WTC11 (cell line): ENCODE measurements at regions of chr7 and their contacts with region 1.

Region 1: DNA sequence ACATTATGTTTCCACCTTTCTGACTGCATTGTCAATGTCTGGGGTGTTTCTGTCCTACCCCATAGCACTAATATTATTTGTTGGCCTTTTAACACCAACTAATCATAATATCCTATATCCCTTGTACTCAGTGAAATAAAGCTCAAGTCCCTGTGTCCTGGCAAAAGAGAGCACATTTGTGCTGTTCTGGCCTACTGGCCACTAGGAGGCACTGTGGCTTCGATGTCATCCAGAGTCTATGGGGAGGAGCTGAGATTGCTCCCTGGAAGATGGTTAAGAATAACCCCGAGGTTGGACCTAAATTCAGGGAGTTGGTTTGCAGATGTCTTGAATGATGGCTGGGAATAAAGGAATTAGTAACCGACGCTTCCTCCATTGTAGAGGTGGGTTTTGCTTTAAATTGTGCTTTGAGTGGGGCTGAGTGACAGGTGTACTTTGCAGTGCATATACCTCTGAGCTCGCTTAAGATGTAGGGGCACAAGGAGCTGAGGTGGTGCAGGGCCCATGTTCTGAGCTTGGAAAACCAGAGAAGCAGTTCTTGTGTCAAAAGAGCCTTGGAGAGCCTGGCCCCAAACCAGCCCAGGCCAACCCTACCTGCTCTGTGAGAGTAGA is 191.2 kb upstream of the PRSS1 start:
- DNase-seq: peak; percentile 76
- ATAC-seq: peak; percentile 93
- H3K4me3 Mint-ChIP-seq: no peak overlapping the region
- H3K27ac Mint-ChIP-seq: no peak overlapping the region
- H3K4me1 Mint-ChIP-seq: peaks cover 2% of the 10 kb centered on the region; the same call in 1 of the 2 replicates
- H3K27me3 Mint-ChIP-seq: peaks cover 3% of the 10 kb centered on the region; the same call in 1 of the 2 replicates
- CTCF ChIP-seq: peak; percentile 61

Region 2: GRCh38 chr7:142301923-142302550 is 256.0 kb before region 1 on chr7:
- CTCF ChIA-PET with region 1: interaction called, 11 read pairs
- POLR2A ChIA-PET with region 1: no interaction called
- DNase-seq: no peak
- ATAC-seq: no peak
- H3K4me3 Mint-ChIP-seq: no peak overlapping the region
- H3K27ac Mint-ChIP-seq: no peak overlapping the region
- H3K4me1 Mint-ChIP-seq: peaks cover 29% of the 10 kb centered on the region
- H3K27me3 Mint-ChIP-seq: peaks cover 22% of the 10 kb centered on the region
- CTCF ChIP-seq: no peak

Region 3: DNA sequence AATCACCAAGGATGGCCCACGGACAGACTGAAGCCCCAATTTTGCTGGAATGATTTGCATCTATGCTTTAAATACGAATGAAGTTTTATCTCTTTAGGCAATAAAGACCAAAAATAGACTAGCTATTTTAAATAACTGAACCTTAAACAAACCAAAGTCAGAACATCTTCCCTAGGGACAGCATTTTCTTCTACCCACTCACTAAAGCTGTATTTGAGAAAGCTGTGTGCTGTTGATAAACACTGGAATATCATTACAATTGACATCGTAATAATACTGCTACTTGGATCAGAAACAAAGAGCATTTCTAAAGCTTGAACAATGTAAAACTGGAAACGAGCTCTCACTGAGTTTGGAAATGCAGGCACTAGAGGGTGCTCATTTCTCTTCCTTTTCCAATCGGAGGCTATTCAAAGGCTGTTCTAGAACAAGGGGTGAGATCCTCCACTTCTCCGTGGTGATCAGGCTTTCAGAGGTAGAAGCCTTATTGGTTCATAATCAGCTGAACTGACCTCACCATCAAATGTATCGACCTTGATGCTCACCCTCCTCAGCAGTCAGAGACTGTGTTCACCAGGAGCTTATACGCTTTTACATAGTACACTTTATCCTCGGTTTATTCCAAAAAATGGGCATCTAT is 34.1 kb before region 1 on chr7:
- CTCF ChIA-PET with region 1: interaction called, 17 read pairs
- POLR2A ChIA-PET with region 1: no interaction called
- DNase-seq: no peak
- ATAC-seq: peak; percentile 27
- H3K4me3 Mint-ChIP-seq: no peak overlapping the region
- H3K27ac Mint-ChIP-seq: no peak overlapping the region
- H3K4me1 Mint-ChIP-seq: peaks cover 3% of the 10 kb centered on the region; the same call in 1 of the 2 replicates
- H3K27me3 Mint-ChIP-seq: peaks cover 2% of the 10 kb centered on the region; the same call in 1 of the 2 replicates
- CTCF ChIP-seq: no peak

Region 4: GRCh38 chr7:142546452-142546851 is 11.6 kb before region 1 on chr7:
- CTCF ChIA-PET with region 1: interaction called, 27 read pairs
- POLR2A ChIA-PET with region 1: no interaction called
- DNase-seq: no peak
- ATAC-seq: no peak
- H3K4me3 Mint-ChIP-seq: no peak overlapping the region
- H3K27ac Mint-ChIP-seq: no peak overlapping the region
- H3K4me1 Mint-ChIP-seq: no peaks in the 10 kb centered on the region
- H3K27me3 Mint-ChIP-seq: no peaks in the 10 kb centered on the region
- CTCF ChIP-seq: no peak

Region 5: GRCh38 chr7:142581346-142581745 is 23.3 kb after region 1 on chr7:
- CTCF ChIA-PET with region 1: interaction called, 55 read pairs
- POLR2A ChIA-PET with region 1: no interaction called
- DNase-seq: no peak
- ATAC-seq: no peak
- H3K4me3 Mint-ChIP-seq: no peak overlapping the region
- H3K27ac Mint-ChIP-seq: no peak overlapping the region
- H3K4me1 Mint-ChIP-seq: peaks cover 14% of the 10 kb centered on the region
- H3K27me3 Mint-ChIP-seq: no peaks in the 10 kb centered on the region; the same call in 1 of the 2 replicates
- CTCF ChIP-seq: no peak

Region 6: DNA sequence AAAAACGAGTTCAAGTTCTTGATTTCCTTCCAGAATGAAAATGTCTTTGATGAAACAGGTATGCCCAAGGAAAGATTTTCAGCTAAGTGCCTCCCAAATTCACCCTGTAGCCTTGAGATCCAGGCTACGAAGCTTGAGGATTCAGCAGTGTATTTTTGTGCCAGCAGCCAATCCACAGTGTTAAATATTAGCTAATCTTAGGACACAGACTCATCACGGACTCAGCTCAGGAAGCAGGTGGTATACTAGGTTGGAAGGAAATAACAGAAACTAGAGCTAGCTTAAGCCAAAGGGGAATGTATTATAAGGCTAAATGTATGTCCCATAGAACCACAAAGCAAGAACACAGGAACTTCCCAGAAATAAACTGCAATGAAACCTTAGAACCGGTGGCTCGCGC is 40.2 kb after region 1 on chr7:
- CTCF ChIA-PET with region 1: interaction called, 12 read pairs
- POLR2A ChIA-PET with region 1: no interaction called
- DNase-seq: no peak
- ATAC-seq: no peak
- H3K4me3 Mint-ChIP-seq: no peak overlapping the region
- H3K27ac Mint-ChIP-seq: no peak overlapping the region
- H3K4me1 Mint-ChIP-seq: no peaks in the 10 kb centered on the region
- H3K27me3 Mint-ChIP-seq: no peaks in the 10 kb centered on the region; the same call in 1 of the 2 replicates
- CTCF ChIP-seq: no peak

Region 7: DNA sequence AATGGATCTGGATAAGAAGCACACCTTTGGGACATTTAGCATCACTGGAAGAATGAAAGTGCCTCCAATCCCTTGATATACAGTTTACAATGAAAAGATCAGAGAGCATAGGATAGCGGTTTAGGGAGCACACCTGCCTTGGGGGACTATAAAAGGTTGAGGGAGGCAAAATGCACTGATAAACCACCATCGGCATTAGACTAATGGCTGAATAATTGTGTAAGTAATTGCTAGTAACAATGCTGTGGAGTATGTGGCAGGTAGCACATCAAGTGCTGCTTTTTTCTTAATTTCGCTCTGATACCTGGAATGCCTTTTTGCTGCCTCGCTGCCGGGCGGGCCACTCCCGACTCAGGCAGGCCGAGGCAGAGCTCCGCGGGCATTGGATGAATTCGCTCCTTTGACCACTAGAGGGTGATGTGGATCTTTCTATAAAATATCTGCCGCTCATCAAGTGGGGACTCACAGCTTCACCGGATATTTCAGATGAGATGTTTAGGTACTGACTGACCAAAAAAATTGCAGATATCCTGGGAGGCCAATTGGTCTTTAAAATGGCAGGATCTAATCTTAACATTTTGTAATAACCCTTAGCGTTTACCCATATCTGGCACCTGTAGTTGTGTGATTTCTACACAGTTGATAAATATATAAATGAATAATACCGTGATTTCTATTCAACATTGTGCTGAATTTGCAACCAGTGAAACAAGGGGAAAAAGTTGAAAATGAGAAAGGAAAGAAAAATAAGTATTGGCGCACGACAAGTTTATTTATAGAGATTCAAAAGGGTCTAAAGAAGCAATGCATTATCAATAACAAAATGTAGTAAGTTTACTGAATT is 74.4 kb after region 1 on chr7:
- CTCF ChIA-PET with region 1: interaction called, 22 read pairs
- POLR2A ChIA-PET with region 1: no interaction called
- DNase-seq: peak; percentile 71
- ATAC-seq: peak; percentile 98
- H3K4me3 Mint-ChIP-seq: no peak overlapping the region
- H3K27ac Mint-ChIP-seq: no peak overlapping the region
- H3K4me1 Mint-ChIP-seq: peaks cover 2% of the 10 kb centered on the region; the same call in 1 of the 2 replicates
- H3K27me3 Mint-ChIP-seq: peaks cover 13% of the 10 kb centered on the region
- CTCF ChIP-seq: peak; percentile 63

Region 8: GRCh38 chr7:142745091-142745635 is 187.1 kb after region 1 on chr7:
- CTCF ChIA-PET with region 1: no interaction called
- POLR2A ChIA-PET with region 1: no interaction called
- DNase-seq: no peak
- ATAC-seq: no peak
- H3K4me3 Mint-ChIP-seq: no peak overlapping the region
- H3K27ac Mint-ChIP-seq: no peak overlapping the region
- H3K4me1 Mint-ChIP-seq: peaks cover 8% of the 10 kb centered on the region; the same call in 1 of the 2 replicates
- H3K27me3 Mint-ChIP-seq: peaks cover 13% of the 10 kb centered on the region
- CTCF ChIP-seq: no peak